ENCODE measurements at regions of chr7 and their contacts with region 1.

Region 1: DNA sequence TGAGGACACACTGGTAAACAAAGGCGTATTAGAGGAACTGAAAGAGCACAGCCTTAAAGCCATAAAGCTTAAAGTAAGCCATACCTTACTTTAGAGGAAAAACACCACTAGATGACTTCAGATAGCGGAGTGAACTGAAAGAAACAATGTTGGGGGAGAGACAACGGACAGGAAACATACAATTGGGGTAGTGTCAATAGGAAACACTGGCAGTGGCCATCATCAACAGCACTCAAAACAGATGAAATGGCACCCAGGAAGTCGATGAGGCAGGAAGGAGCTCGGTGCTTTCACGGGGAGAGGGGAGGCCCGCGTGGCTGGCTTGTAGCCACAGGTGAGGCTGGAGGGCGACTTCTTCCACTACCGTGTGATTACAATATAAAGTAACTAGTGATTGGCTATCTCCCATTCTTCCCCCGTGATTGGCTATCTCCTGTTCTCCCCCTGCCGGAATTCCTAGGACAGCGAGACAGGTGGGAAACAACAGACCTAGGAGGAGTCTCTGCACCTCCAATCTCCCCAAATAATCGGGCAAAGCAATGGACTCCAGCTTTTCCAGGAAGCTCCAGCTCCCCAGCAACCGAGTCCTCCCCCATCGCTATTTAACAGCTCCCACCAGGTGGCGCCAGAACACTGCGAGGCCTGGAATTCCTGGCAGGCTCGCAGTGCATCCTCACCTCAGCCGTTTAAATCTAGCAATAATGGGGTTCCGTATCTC is 2.4 kb upstream of the TAS2R38 start:
- DNase-seq: peak; percentile 67
- H3K4me3 Mint-ChIP-seq: peak overlapping the region; percentile 58
- H3K27ac Mint-ChIP-seq: no peak overlapping the region
- H3K4me1 Mint-ChIP-seq: peaks cover 15% of the 10 kb centered on the region
- H3K27me3 Mint-ChIP-seq: no peaks in the 10 kb centered on the region

Region 2: DNA sequence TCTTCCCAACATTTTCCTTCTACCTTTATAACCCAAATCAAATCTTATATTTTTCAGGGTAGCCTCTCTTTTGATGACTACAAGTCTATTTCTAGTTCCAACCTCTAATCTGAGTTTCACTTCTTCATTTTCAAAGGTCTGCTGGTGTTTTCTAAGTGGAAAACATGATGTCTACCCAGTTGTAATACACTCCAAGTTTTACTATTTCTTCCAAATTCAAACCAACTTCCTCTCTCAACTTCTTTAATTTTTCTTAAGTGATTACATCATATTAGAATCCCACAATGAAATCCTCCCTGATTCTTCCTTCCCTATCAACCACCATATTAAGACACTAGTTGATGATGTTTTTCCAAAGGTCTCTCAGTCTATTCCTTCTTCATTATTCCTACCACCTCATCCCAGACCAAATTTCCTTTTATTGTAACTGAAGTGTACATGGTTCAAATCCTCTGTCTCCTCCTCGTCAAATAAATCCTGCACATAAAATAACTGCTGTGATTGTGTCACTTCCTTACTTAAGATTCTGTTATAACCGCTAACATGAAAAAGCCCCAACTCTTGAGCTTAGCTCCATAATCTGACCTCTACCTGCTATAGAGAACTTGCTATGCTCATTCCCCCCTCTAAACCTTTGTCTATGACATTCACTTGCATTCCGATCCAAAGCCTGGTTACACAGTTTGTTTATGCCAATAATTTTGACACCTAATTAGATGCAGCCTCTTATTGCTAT is 15.1 kb before region 1 on chr7:
- CTCF ChIA-PET with region 1: interaction called, 22 read pairs
- POLR2A ChIA-PET with region 1: no interaction called
- DNase-seq: no peak
- H3K4me3 Mint-ChIP-seq: no peak overlapping the region
- H3K27ac Mint-ChIP-seq: no peak overlapping the region
- H3K4me1 Mint-ChIP-seq: no peaks in the 10 kb centered on the region
- H3K27me3 Mint-ChIP-seq: no peaks in the 10 kb centered on the region

Region 3: DNA sequence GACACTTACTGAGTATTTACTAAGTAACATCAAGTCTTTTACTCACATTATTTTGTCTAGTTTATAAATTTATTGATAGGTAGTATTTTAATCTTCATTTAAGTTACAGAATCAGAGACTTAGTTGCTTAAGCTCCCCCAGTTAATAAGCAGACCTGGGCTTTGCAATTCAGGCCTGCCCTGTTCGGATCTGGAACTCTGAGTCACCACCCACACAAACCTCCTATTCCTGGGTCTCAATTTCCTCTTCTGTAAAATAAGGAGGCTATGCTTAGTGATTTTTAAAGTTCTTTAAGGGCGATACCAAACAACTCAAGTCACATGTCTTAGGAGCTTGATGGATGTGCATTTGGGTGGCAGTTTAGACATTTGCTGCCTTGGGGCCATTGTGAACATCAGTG is 16.2 kb after region 1 on chr7:
- CTCF ChIA-PET with region 1: interaction called, 12 read pairs
- POLR2A ChIA-PET with region 1: no interaction called
- DNase-seq: no peak
- H3K4me3 Mint-ChIP-seq: no peak overlapping the region
- H3K27ac Mint-ChIP-seq: no peak overlapping the region
- H3K4me1 Mint-ChIP-seq: peaks cover 6% of the 10 kb centered on the region
- H3K27me3 Mint-ChIP-seq: peaks cover 4% of the 10 kb centered on the region

Region 4: DNA sequence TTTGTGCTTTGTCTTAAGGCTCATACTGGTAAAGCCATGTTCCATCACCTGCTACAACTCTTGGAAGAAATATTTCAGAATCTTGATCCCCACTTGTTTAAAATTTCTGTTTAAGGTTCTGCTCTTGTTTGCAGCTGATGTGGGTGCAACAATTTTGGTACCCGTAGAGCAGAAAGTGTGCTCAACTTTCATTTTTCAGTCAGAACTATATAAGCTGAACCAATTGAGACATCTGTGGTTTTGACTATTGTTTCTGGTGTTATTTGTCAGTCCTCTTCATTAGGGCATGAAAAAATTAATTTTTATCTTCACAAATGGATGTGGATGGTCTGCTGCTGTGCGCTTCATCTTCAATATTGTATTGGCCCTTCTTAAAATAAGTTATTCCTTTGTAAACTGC is 30.6 kb after region 1 on chr7:
- CTCF ChIA-PET with region 1: interaction called, 17 read pairs
- POLR2A ChIA-PET with region 1: no interaction called
- DNase-seq: no peak
- H3K4me3 Mint-ChIP-seq: no peak overlapping the region
- H3K27ac Mint-ChIP-seq: no peak overlapping the region
- H3K4me1 Mint-ChIP-seq: no peaks in the 10 kb centered on the region
- H3K27me3 Mint-ChIP-seq: no peaks in the 10 kb centered on the region

Region 5: GRCh38 chr7:142185801-142186200 is 209.8 kb after region 1 on chr7:
- CTCF ChIA-PET with region 1: interaction called, 12 read pairs
- POLR2A ChIA-PET with region 1: no interaction called
- DNase-seq: no peak
- H3K4me3 Mint-ChIP-seq: no peak overlapping the region
- H3K27ac Mint-ChIP-seq: no peak overlapping the region
- H3K4me1 Mint-ChIP-seq: peaks cover 10% of the 10 kb centered on the region
- H3K27me3 Mint-ChIP-seq: peaks cover 25% of the 10 kb centered on the region

Region 6: DNA sequence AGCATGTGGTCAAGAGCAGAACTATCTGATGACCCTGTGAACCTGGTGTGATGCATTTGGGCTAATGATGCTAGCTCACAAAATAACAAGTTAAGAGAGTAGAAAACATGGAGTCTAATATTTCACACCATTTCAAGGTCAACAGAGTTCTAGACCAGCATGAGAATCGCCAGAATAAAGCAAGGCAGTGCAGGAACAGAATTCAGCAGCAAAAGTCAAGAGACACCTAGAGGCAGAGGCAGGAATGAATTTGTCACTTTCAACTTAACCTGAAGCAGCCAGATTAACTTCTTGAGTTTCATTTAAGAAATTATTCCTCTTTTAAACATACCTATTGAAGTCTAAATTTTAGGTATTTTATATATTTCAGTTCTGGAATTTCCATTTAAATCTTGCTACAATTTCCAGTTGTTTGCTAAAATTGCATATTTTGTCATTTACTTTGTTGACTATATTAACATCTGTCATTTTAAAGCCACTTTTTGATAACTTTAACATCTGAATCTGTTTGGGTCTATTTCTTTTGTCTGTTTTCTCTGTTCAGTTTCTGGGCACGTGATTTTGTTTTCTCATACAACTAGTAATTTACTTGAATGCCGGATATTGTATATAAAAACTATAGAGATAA is 326.1 kb after region 1 on chr7:
- CTCF ChIA-PET with region 1: interaction called, 23 read pairs
- POLR2A ChIA-PET with region 1: no interaction called
- DNase-seq: no peak
- H3K4me3 Mint-ChIP-seq: no peak overlapping the region
- H3K27ac Mint-ChIP-seq: no peak overlapping the region
- H3K4me1 Mint-ChIP-seq: peaks cover 6% of the 10 kb centered on the region
- H3K27me3 Mint-ChIP-seq: peaks cover 16% of the 10 kb centered on the region

Measured in activated CD4-positive, alpha-beta memory T cell treated with anti-CD3 and anti-CD28 coated beads, Interleukin-2, amount 10 ng/mL, durations not matched to agents 7 days and 5 days (primary cell).